Activated naive CD4-positive, alpha-beta T cell treated with anti-CD3 and anti-CD28 coated beads for 36 hours (primary cell): ENCODE measurements at regions of chr17 and their contacts with region 1.

Region 1: DNA sequence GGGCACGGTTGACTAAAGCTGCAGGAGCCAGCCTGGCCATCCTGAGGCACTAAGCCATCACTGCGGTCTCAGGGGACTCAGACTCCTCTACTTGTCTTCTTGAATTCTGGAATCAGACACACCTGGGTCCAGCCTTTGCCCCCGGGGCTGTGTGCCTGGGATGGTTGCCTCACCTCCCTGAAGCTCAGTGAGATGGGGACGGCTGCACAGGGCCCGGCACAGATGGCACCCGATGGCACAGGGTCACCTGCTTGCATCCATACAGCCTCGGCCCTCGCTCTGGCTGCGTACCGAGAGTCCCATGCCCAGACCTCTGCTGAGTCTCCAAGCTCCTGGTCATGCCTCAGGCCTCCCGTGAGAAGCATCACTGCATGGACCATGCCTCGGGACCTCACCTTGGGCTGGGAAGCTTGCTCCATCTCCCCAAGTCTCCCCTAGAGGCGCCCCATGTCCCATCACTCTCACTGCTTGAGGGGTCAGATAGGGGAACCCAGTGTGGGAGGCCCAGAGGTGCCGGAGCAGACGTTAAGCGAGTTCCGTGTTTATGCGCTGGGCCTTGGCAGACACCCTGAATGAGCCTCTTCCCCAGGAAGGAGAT is 316.3 kb downstream of the SEC14L1 start:
- DNase-seq: peak; percentile 71
- H3K4me3 Mint-ChIP-seq: peak overlapping the region; percentile 86
- H3K27ac Mint-ChIP-seq: peak overlapping the region; percentile 100
- H3K4me1 Mint-ChIP-seq: peaks cover 42% of the 10 kb centered on the region
- H3K27me3 Mint-ChIP-seq: no peaks in the 10 kb centered on the region

Region 2: DNA sequence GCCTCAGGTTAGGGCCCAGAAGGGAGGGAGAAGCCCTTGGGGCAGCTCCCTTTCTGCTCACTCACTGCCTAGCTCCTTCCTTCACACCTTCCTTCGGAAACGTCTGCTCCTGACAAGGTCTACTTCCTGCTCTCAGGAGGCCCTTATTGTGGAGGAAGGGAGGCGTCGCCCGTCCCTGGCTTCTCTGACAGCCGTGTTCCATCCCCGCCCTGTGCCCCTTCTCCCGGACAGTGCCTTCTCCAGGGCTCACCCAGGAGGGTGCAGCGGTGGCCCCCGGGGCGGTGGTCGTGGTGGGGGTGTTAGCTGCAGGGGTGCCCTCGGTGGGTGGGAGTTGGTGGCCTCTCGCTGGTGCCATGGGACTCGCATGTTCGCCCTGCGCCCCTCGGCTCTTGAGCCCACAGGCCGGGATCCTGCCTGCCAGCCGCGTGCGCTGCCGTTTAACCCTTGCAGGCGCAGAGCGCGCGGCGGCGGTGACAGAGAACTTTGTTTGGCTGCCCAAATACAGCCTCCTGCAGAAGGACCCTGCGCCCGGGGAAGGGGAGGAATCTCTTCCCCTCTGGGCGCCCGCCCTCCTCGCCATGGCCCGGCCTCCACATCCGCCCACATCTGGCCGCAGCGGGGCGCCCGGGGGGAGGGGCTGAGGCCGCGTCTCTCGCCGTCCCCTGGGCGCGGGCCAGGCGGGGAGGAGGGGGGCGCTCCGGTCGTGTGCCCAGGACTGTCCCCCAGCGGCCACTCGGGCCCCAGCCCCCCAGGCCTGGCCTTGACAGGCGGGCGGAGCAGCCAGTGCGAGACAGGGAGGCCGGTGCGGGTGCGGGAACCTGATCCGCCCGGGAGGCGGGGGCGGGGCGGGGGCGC is 84.4 kb before region 1 on chr17:
- CTCF ChIA-PET with region 1: no interaction called
- intact Hi-C with region 1: no loop called
- DNase-seq: peak; percentile 65
- H3K4me3 Mint-ChIP-seq: peak overlapping the region; percentile 67
- H3K27ac Mint-ChIP-seq: no peak overlapping the region
- H3K4me1 Mint-ChIP-seq: peaks cover 65% of the 10 kb centered on the region
- H3K27me3 Mint-ChIP-seq: no peaks in the 10 kb centered on the region

Region 3: GRCh38 chr17:77494664-77495435 is 37.8 kb after region 1 on chr17:
- CTCF ChIA-PET with region 1: interaction called, 12 read pairs
- intact Hi-C with region 1: loop called (anchors 1 kb)
- DNase-seq: peak; percentile 81
- H3K4me3 Mint-ChIP-seq: no peak overlapping the region
- H3K27ac Mint-ChIP-seq: peak overlapping the region; percentile 77
- H3K4me1 Mint-ChIP-seq: peaks cover 11% of the 10 kb centered on the region
- H3K27me3 Mint-ChIP-seq: no peaks in the 10 kb centered on the region